GM12878 (cell line): ENCODE measurements at regions of chr16 and their contacts with region 1.

Region 1: GRCh38 chr16:12754824-12755543 is 48.7 kb downstream of the CPPED1 start:
- DNase-seq: no peak
- ATAC-seq: no peak
- H3K4me3 ChIP-seq: no peak overlapping the region
- H3K27ac ChIP-seq: no peak overlapping the region
- H3K4me1 ChIP-seq: peaks cover 14% of the 10 kb centered on the region
- H3K27me3 ChIP-seq: no peaks in the 10 kb centered on the region
- CTCF ChIP-seq: no peak
- EP300 ChIP-seq: no peak
- POLR2A ChIP-seq: no peak
- RAD21 ChIP-seq: no peak

Region 2: GRCh38 chr16:12398029-12398682 is 356.8 kb before region 1 on chr16:
- CTCF ChIA-PET with region 1: no interaction called
- POLR2A ChIA-PET with region 1: no interaction called
- RAD21 ChIA-PET with region 1: no interaction called
- SMC1A ChIA-PET with region 1: no interaction called
- in situ Hi-C with region 1: no loop called
- intact Hi-C with region 1: no loop called
- DNase-seq: no peak
- ATAC-seq: no peak
- H3K4me3 ChIP-seq: no peak overlapping the region
- H3K27ac ChIP-seq: no peak overlapping the region
- H3K4me1 ChIP-seq: peaks cover 7% of the 10 kb centered on the region; the same call in 1 of the 2 replicates
- H3K27me3 ChIP-seq: no peaks in the 10 kb centered on the region
- CTCF ChIP-seq: no peak
- EP300 ChIP-seq: no peak
- POLR2A ChIP-seq: no peak
- RAD21 ChIP-seq: no peak

Region 3: GRCh38 chr16:12646490-12647274 is 108.3 kb before region 1 on chr16:
- CTCF ChIA-PET with region 1: interaction called, 4 read pairs
- POLR2A ChIA-PET with region 1: no interaction called
- RAD21 ChIA-PET with region 1: interaction called, 3 read pairs
- SMC1A ChIA-PET with region 1: interaction called, 3 read pairs
- in situ Hi-C with region 1: no loop called
- intact Hi-C with region 1: loop called (anchors 2 kb)
- DNase-seq: peak; percentile 70
- ATAC-seq: peak; percentile 71
- H3K4me3 ChIP-seq: no peak overlapping the region
- H3K27ac ChIP-seq: 0 out of 2 replicates have a peak overlapping the region, but pooled peaks have one; percentile 2
- H3K4me1 ChIP-seq: no peaks in the 10 kb centered on the region
- H3K27me3 ChIP-seq: no peaks in the 10 kb centered on the region
- CTCF ChIP-seq: no peak
- EP300 ChIP-seq: no peak
- POLR2A ChIP-seq: no peak
- RAD21 ChIP-seq: no peak

Region 4: GRCh38 chr16:12659871-12660270 is 95.1 kb before region 1 on chr16:
- CTCF ChIA-PET with region 1: no interaction called
- POLR2A ChIA-PET with region 1: no interaction called
- RAD21 ChIA-PET with region 1: no interaction called
- SMC1A ChIA-PET with region 1: no interaction called
- in situ Hi-C with region 1: no loop called
- intact Hi-C with region 1: no loop called
- DNase-seq: no peak
- ATAC-seq: no peak
- H3K4me3 ChIP-seq: no peak overlapping the region
- H3K27ac ChIP-seq: no peak overlapping the region
- H3K4me1 ChIP-seq: no peaks in the 10 kb centered on the region
- H3K27me3 ChIP-seq: no peaks in the 10 kb centered on the region
- CTCF ChIP-seq: no peak
- EP300 ChIP-seq: no peak
- POLR2A ChIP-seq: no peak
- RAD21 ChIP-seq: no peak

Region 5: GRCh38 chr16:12716658-12717057 is 38.3 kb before region 1 on chr16:
- CTCF ChIA-PET with region 1: no interaction called
- POLR2A ChIA-PET with region 1: no interaction called
- RAD21 ChIA-PET with region 1: no interaction called
- SMC1A ChIA-PET with region 1: no interaction called
- in situ Hi-C with region 1: no loop called
- intact Hi-C with region 1: no loop called
- DNase-seq: no peak
- ATAC-seq: no peak
- H3K4me3 ChIP-seq: no peak overlapping the region
- H3K27ac ChIP-seq: no peak overlapping the region
- H3K4me1 ChIP-seq: no peaks in the 10 kb centered on the region
- H3K27me3 ChIP-seq: no peaks in the 10 kb centered on the region
- CTCF ChIP-seq: no peak
- EP300 ChIP-seq: no peak
- POLR2A ChIP-seq: no peak
- RAD21 ChIP-seq: no peak

Region 6: GRCh38 chr16:12803203-12804097 is 48.5 kb after region 1 on chr16 and contains the start of gene CPPED1:
- CTCF ChIA-PET with region 1: interaction called, 4 read pairs
- POLR2A ChIA-PET with region 1: interaction called, 3 read pairs
- RAD21 ChIA-PET with region 1: interaction called, 11 read pairs
- SMC1A ChIA-PET with region 1: interaction called, 41 read pairs
- in situ Hi-C with region 1: loop called (anchors 5 kb)
- intact Hi-C with region 1: loop called (anchors 1 kb)
- DNase-seq: peak; percentile 72
- ATAC-seq: peak; percentile 89
- H3K4me3 ChIP-seq: peak within 1 kb of the TSS; percentile 88
- H3K27ac ChIP-seq: peak within 1 kb of the TSS; percentile 81
- H3K4me1 ChIP-seq: peaks cover 22% of the 10 kb centered on the region
- H3K27me3 ChIP-seq: no peaks in the 10 kb centered on the region
- CTCF ChIP-seq: no peak; a peak in 1 of 6 replicates
- EP300 ChIP-seq: peak in 1 of 2 experiments; percentile 24; a peak in 1 of 4 replicates
- POLR2A ChIP-seq: peak; percentile 97
- RAD21 ChIP-seq: no peak
- polyA plus RNA-seq, gene CPPED1: 11.4 to 12.3 TPM

Region 7: DNA sequence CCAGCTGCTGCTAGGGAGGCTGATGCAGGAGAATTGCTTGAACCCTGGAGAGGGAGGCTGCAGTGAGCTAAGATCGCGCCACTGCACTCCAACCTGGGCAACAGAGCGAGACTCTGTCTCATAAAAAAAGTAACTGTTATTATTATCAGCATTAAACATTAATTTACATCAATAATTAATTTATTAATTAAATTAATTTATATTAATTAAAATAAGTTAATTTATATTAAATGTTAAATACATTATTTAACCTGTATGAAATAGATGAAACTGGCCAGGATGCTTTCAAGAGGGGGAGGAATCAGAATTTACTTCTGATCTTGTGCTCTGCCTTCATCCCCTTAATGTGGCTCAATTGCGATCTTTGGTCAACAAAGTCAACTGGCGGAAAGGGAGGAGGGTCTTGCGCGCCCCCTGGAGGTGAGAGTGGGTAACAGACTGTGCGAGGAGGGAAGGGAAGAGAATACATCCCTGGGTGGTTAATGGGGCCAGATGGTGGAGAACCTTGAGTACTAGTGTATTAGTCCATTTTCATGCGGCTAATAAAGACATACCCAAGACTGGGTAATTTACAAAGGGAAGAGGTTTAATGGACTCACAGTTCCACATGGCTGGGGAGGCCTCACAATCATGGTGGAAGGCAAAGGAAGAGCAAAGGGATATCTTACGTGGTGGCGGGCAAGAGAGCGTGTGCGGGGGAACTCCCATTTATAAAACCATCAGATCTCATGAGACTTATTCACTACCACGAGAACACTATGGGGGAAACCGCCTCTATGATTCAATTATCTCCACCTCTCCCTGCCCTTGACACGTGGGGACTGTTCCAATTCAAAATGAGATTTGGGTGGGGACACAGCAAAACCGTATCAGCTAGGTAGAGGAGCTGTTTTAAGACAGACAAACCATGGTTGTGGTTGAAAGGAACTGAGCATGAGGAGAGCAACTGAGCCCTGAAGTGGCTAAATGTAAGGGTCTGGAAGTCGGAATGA is 64.4 kb after region 1 on chr16:
- CTCF ChIA-PET with region 1: interaction called, 3 read pairs
- POLR2A ChIA-PET with region 1: no interaction called
- RAD21 ChIA-PET with region 1: interaction called, 5 read pairs
- SMC1A ChIA-PET with region 1: interaction called, 3 read pairs
- in situ Hi-C with region 1: no loop called
- intact Hi-C with region 1: loop called (anchors 5 kb)
- DNase-seq: peak; percentile 24
- ATAC-seq: peak; percentile 85
- H3K4me3 ChIP-seq: no peak overlapping the region
- H3K27ac ChIP-seq: no peak overlapping the region
- H3K4me1 ChIP-seq: no peaks in the 10 kb centered on the region
- H3K27me3 ChIP-seq: no peaks in the 10 kb centered on the region
- CTCF ChIP-seq: peak; percentile 58 to 85 (median 76)
- EP300 ChIP-seq: no peak
- POLR2A ChIP-seq: no peak
- RAD21 ChIP-seq: peak; percentile 95